ENCODE measurements at regions of chr11 and their contacts with region 1.

Region 1: GRCh38 chr11:1546536-1547400 is 25.3 kb downstream of the DUSP8 start:
- DNase-seq: peak; percentile 54 to 71 (median 60)
- ATAC-seq: peak in 3 of 4 donors; percentile 29 to 69 (median 57)
- H3K4me3 ChIP-seq: peak overlapping the region; percentile 34 to 63 (median 52)
- H3K27ac ChIP-seq: peak overlapping the region in 11 of 12 donors; percentile 72 to 95 (median 85)
- H3K4me1 ChIP-seq: peaks cover 5 to 32% (median 19%) of the 10 kb centered on the region in 12 donors
- H3K27me3 ChIP-seq: peaks cover 0 to 35% (median 9%) of the 10 kb centered on the region in 9 donors
- CTCF ChIP-seq: peak; percentile 57 to 93 (median 81)
- POLR2A ChIP-seq: no peak

Region 2: GRCh38 chr11:1317432-1317831 is 229.3 kb before region 1 on chr11:
- intact Hi-C with region 1: no loop called
- DNase-seq: no peak
- ATAC-seq: no peak
- H3K4me3 ChIP-seq: no peak overlapping the region
- H3K27ac ChIP-seq: no peak overlapping the region
- H3K4me1 ChIP-seq: no peaks in the 10 kb centered on the region
- H3K27me3 ChIP-seq: peaks cover 0 to 4% (median 0%) of the 10 kb centered on the region in 9 donors
- CTCF ChIP-seq: no peak
- POLR2A ChIP-seq: no peak

Region 3: DNA sequence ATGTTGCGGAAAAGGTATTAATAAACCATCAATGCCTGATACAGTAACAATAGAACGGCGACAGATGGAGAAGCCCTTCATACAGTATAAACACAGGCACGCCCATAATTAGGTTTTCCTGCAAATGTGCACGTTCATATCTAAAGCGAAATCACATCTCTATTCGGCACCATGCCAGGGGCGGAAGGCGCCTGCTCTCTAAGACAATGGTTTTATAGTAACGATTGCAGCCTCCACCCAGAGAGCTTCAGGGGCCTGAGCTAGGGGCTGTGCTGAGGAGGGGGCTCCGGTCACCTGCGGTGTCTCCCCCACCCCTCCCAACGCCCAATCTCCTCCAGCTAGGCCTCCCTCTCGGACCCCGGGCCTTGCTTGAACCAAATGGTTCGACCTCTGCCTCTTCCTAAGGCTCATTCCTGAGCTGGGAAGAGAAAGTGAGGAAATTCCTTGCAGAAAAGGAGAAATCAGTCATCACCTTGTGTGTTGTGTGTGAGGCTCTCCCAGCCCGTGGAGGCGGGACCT is 92.4 kb after region 1 on chr11:
- intact Hi-C with region 1: loop called in 2 of 10 experiments (anchors 10 kb)
- DNase-seq: peak in 4 of 5 donors; percentile 60 to 75 (median 68)
- ATAC-seq: peak; percentile 25 to 88 (median 71)
- H3K4me3 ChIP-seq: peak overlapping the region in 4 of 12 donors; percentile 14 to 25 (median 19)
- H3K27ac ChIP-seq: peak overlapping the region in 6 of 12 donors; percentile 22 to 76 (median 68)
- H3K4me1 ChIP-seq: peaks cover 0 to 20% (median 7%) of the 10 kb centered on the region in 12 donors
- H3K27me3 ChIP-seq: peaks cover 0 to 16% (median 0%) of the 10 kb centered on the region in 9 donors
- CTCF ChIP-seq: no peak
- POLR2A ChIP-seq: no peak

Region 4: DNA sequence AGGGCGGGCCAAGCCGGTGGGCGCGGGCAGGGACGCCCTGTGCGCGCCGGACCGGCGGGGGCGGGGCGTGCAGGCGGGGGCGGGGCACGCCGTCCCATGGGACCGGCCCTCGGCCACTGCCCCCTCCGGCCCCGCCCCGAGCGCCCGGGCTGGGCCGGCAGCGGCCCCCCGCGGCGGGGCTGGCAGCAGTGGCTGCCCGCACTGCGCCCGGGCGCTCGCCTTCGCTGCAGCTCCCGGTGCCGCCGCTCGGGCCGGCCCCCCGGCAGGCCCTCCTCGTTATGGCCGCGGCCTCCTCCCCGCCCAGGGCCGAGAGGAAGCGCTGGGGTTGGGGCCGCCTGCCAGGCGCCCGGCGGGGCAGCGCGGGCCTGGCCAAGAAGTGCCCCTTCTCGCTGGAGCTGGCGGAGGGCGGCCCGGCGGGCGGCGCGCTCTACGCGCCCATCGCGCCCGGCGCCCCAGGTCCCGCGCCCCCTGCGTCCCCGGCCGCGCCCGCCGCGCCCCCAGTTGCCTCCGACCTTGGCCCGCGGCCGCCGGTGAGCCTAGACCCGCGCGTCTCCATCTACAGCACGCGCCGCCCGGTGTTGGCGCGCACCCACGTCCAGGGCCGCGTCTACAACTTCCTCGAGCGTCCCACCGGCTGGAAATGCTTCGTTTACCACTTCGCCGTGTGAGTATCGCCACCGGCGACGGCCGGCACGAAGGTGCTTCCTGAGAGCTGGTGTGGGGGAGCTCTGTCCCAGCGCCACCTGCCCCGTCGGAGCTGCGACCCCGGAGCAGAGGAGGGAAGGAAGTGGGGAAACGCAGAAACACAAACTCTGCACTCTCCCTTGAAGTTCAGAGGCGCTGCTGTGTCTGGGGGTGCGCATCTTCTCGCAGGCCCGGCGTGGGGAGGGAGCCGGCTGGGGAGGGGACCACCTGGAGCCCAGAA is 898.3 kb after region 1 on chr11 and contains the start of gene KCNQ1:
- intact Hi-C with region 1: no loop called
- DNase-seq: peak; percentile 55 to 84 (median 69)
- ATAC-seq: peak in 3 of 4 donors; percentile 60 to 85 (median 79)
- H3K4me3 ChIP-seq: peak within 1 kb of the TSS; percentile 11 to 68 (median 53)
- H3K27ac ChIP-seq: peak within 1 kb of the TSS in 9 of 12 donors; percentile 15 to 69 (median 49)
- H3K4me1 ChIP-seq: peaks cover 5 to 49% (median 33%) of the 10 kb centered on the region in 12 donors
- H3K27me3 ChIP-seq: peaks cover 0 to 9% (median 0%) of the 10 kb centered on the region in 9 donors
- CTCF ChIP-seq: peak in 1 of 12 donors; percentile 8
- POLR2A ChIP-seq: peak; percentile 43 to 59
- total RNA-seq, gene KCNQ1: 18.6 to 42.4 (median 38.4) TPM

Measured in heart left ventricle (tissue), 16 donors.